Activated T-helper 2 cell treated with anti-CD3 and anti-CD28 coated beads, Interferon-gamma antibody, Interleukin-2, Interleukin-4, amounts not matched to agents 10 μg/mL and 5 μg/mL and 100 μg/mL, durations not matched to agents 14 hours and 24 hours and 36 hours (primary cell): ENCODE measurements at regions of chr22 and their contacts with region 1.

Region 1: DNA sequence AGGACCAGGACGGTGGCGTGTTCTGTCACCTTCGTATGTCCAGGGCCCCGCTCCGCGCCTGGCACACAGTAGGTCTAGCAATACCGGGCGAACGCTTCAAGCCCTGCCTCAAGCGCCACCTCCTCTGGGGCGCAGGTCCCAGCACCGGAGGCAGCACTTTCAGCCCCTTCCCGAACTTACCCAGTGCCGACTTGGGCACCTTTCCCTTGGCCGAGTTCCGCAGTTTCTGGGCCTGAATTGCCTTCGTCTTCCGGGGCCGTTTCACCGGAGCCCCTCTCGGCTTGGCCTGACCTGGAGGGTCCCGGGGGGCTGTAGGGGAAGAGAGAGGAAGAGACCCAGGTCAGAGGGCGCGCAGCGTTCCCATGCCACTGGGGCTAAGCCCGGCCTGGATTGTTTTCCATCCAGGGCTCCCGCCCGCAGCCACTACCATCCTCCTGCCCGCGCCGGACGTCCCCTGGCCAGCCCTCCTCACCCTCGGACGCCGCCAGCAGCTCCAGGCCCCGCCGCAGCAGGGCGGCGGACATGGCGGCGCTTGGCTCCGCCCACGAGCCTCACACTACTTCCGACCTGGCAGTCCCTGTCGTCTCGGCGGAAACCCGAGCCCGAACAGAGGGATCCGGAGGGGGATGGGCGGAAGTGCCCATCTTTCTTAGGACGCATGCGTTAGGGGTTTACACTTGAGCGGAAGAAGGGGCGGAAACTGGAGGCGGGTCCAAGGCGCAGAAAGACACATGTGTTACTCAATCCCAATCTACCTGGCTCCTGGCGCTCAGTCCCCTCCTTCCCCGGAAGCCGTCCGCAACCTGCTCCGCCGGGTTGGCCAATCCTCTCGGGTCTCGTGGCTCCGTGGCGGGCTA is at the start of gene RPS19BP1:
- DNase-seq: peak; percentile 99
- H3K4me3 Mint-ChIP-seq: peak within 1 kb of the TSS; percentile 96
- H3K27ac Mint-ChIP-seq: peak within 1 kb of the TSS; percentile 90
- H3K4me1 Mint-ChIP-seq: peaks cover 44% of the 10 kb centered on the region
- H3K27me3 Mint-ChIP-seq: no peaks in the 10 kb centered on the region
- total RNA-seq, gene RPS19BP1: 76.9 and 78.4 TPM in 2 replicates

Region 2: GRCh38 chr22:39253435-39254070 is 278.9 kb before region 1 on chr22:
- intact Hi-C with region 1: no loop called
- DNase-seq: no peak
- H3K4me3 Mint-ChIP-seq: no peak overlapping the region
- H3K27ac Mint-ChIP-seq: no peak overlapping the region
- H3K4me1 Mint-ChIP-seq: peaks cover 23% of the 10 kb centered on the region
- H3K27me3 Mint-ChIP-seq: peaks cover 12% of the 10 kb centered on the region

Region 3: DNA sequence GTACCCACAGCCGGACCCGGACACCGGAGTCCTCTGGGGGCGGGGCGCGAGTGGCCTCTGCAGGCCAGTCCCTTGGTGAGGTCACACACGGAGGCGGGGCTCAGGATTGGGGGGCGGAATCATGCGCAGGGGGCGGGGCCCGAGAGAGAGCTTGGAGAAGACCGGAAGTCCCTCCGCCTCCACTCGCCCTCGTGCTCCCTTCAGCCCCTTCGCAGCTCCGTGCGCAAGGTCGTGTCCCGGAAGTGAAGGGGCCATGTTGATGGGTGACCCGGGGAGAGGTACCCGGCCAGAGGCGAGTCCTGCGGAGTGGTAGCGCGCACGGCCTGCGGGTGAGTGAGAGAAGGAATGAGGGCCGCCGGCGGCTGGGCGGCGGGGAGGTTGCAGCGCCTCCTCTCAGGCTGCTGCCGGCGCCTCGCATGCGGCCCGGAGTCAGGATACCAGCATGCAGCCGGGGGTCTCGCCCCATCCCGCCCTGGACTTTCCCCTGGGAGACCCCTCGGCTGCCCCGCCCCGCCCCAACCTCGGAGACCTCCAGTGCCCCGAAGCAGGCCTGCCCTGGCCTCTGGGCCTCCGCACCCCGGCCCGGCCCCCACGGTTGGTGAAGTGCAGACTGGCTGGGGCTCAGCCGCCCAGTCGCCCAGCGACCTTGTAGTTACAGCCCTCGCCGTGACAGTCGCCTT is 30.2 kb before region 1 on chr22 and contains the start of gene MIEF1:
- intact Hi-C with region 1: loop called (anchors 2 kb)
- DNase-seq: peak; percentile 88
- H3K4me3 Mint-ChIP-seq: peak within 1 kb of the TSS; percentile 99
- H3K27ac Mint-ChIP-seq: peak within 1 kb of the TSS; percentile 98
- H3K4me1 Mint-ChIP-seq: peaks cover 26% of the 10 kb centered on the region
- H3K27me3 Mint-ChIP-seq: no peaks in the 10 kb centered on the region
- total RNA-seq, gene MIEF1: 46.9 and 47.5 TPM in 2 replicates

Region 4: DNA sequence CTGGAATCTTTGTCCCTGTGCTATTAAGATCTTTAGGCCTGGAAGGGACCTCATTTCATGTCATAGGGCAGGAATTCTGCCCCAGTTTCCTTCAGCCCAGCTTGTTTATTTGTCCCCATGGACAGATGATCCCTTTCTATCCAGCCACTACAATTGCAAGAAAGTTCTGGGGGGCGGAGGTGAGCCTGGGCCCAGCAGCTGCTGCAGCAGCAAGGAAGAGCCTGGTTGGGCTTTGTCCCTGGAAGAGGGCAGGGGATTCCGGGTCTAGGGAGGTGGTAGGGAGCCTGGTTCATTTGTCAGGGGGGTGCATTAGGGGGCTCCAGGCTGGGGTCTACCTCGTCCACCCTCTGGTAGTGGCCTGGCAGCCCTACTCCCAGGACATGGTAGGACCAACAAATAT is 21.7 kb after region 1 on chr22:
- intact Hi-C with region 1: loop called (anchors 1 kb)
- DNase-seq: no peak
- H3K4me3 Mint-ChIP-seq: no peak overlapping the region
- H3K27ac Mint-ChIP-seq: no peak overlapping the region
- H3K4me1 Mint-ChIP-seq: peaks cover 2% of the 10 kb centered on the region
- H3K27me3 Mint-ChIP-seq: peaks cover 51% of the 10 kb centered on the region

Region 5: DNA sequence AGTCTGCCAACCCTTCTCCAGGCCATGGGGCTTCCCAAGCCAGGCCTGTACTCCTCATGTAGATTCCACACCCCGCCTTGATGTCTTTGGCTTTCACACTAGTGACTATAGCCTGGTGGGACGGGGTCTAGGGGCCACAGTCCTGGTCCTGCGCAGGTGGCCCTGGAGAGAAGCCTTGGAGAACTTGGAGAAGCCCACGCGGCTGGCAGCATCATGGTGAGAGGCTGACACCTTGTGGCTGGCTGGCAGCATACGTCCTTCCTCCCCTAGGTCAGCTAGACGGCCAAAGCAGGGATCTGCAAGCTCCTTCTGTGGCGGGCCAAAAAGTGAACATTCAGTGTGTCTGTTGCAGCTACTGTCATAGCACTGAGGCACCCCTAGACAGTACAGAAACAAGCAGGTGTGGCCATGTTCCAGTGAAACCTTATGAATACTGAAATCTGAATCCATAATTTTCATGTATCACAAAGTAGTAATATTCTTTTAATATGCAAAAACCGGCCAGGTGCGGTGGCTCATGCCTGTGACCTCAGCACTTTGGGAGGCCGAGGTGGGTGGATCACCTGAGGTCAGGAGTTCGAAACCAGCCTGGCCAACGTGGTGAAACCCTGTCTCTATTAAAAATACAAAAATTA is 504.3 kb after region 1 on chr22:
- intact Hi-C with region 1: loop called (anchors 2 kb)
- DNase-seq: peak; percentile 50
- H3K4me3 Mint-ChIP-seq: no peak overlapping the region
- H3K27ac Mint-ChIP-seq: no peak overlapping the region
- H3K4me1 Mint-ChIP-seq: peaks cover 10% of the 10 kb centered on the region
- H3K27me3 Mint-ChIP-seq: peaks cover 12% of the 10 kb centered on the region

Region 6: DNA sequence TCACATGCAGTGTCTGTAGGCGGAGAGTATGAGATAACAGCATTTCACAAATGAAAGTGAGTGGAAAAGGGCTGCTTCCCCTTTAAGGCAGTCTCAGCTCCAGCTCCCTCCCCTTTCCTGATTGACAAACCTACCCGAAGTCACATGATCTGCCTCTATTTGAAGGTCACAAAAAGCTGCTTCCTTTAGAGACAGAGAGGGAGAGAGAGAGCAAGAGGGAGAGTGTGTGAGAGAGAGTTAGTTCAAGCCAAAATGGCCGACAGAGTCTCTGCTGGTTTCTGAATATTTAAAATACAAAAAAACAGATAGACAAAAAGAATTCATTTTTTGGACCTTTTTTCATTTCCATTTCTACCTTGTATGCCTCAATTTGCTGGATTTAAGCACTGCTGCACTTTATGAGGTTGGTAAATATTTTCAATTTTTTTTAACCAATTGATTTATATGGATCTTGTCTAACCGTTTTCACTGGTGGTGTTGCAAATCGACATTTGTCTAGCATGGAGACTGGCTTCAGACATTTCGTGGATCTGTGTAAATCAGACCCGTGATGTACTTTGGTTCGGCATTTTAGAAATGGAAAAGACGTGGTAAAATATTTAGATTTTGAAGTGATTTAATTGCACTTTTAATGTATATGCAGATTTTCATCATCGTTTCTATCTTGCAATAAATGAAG is 645.4 kb after region 1 on chr22 and contains the start of gene TNRC6B:
- intact Hi-C with region 1: loop called (anchors 5 kb)
- DNase-seq: peak; percentile 79
- H3K4me3 Mint-ChIP-seq: peak within 1 kb of the TSS; percentile 88
- H3K27ac Mint-ChIP-seq: peak within 1 kb of the TSS; percentile 89
- H3K4me1 Mint-ChIP-seq: peaks cover 52% of the 10 kb centered on the region
- H3K27me3 Mint-ChIP-seq: no peaks in the 10 kb centered on the region
- total RNA-seq, gene TNRC6B: 28.0 and 34.1 TPM in 2 replicates

Region 7: GRCh38 chr22:40950962-40951794 is 1418.7 kb after region 1 on chr22 and contains the start of gene RBX1:
- intact Hi-C with region 1: loop called (anchors 5 kb)
- DNase-seq: peak; percentile 98
- H3K4me3 Mint-ChIP-seq: peak within 1 kb of the TSS; percentile 95
- H3K27ac Mint-ChIP-seq: peak within 1 kb of the TSS; percentile 98
- H3K4me1 Mint-ChIP-seq: peaks cover 28% of the 10 kb centered on the region
- H3K27me3 Mint-ChIP-seq: no peaks in the 10 kb centered on the region
- total RNA-seq, gene RBX1: 103 and 110 TPM in 2 replicates